Heart right ventricle (tissue), 16 donors: ENCODE measurements at regions of chr4 and their contacts with region 1.

Region 1: DNA sequence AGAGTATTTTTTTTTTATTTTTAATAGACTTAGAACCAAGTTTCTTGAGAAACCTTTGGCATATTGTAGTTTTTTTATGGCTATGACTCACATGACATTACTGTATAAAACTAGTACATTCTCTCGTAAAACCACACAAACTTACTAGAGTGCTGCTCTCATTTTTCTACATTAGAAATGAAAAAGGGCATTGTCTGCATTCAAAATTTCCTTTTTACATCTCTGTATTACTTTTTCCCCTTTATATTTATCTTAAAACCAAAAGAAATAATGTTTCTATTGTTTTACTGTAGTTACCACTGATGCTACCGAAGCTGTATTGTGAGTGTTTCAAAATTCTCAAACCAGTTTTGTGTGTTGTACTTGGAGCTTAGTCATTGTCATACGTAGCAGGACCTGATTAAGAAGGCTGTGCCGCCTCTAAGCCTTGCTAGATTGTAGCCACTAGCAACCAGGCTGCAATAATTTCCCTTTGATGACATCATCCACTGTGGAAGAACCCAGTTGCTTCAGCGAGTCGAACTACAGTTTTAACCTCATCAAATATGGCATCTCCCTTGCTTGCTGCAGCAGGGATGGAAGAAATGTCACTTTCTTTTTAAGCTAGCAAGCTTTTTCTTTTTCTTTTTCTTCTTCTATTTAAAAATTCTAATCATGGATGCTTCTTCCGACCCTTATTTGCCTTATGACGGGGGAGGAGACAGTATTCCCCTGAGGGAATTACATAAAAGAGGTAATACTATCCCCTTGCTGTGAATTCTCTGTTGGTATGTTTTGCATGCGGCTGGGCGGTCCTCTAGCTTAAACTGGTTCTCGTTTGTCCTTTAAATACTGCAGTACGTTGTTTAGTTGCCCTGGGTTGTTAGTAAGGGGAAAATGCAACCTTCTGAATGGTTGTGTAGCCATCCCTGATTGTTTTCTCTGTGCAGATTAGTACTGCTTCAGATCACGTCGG is 39.6 kb downstream of the CLCN3 start:
- DNase-seq: peak in 1 of 2 donors; percentile 89
- ATAC-seq: peak; percentile 96 to 100 (median 99)
- H3K4me3 ChIP-seq: peak overlapping the region; percentile 19 to 59 (median 50)
- H3K27ac ChIP-seq: peak overlapping the region; percentile 68 to 89 (median 84)
- H3K4me1 ChIP-seq: peaks cover 0 to 64% (median 33%) of the 10 kb centered on the region in 9 donors
- H3K27me3 ChIP-seq: no peaks in the 10 kb centered on the region
- CTCF ChIP-seq: no peak

Region 2: DNA sequence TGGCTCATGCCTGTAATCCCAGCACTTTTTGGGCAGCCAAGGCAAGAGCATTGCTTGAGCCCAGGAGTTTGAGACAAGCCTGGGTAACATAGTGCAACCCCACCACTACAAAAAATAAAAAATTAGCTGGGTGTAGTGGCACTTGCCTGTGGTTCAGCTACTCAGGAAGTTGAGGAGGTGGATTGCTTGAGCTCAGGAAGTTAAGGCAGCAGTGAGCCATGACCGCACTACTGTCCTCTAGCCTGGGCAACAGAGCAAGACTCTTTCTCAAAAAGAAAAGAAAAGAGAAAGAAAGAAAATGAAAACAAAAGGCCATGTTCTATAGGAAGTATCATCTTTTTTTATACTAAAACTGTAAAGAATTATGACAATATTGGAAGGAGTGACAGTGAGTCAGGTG is 86.1 kb before region 1 on chr4:
- intact Hi-C with region 1: no loop called
- DNase-seq: no peak
- ATAC-seq: no peak
- H3K4me3 ChIP-seq: no peak overlapping the region
- H3K27ac ChIP-seq: no peak overlapping the region
- H3K4me1 ChIP-seq: no peaks in the 10 kb centered on the region
- H3K27me3 ChIP-seq: no peaks in the 10 kb centered on the region
- CTCF ChIP-seq: no peak

Region 3: DNA sequence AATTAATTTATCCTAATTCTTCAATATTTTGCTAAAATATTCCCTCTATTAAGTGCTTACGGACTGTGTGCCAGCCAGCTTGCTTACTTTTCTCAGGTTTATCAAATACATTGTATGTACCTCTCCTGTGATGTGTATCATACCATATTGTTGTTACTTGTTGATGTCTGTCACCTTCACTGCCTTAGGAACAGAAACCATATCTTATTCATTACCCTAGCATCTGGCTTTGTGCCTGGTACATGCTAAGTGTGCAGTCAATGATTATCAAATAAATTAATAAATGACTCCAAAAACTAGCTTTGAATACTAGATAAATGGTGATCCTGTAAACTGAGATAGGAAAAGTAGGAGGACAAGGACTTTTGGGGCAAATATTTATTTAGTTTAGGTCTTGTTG is 32.7 kb before region 1 on chr4:
- intact Hi-C with region 1: loop called in 3 of 10 experiments (anchors 5 kb)
- DNase-seq: no peak
- ATAC-seq: peak in 3 of 8 donors; percentile 40 to 49 (median 41)
- H3K4me3 ChIP-seq: no peak overlapping the region
- H3K27ac ChIP-seq: peak overlapping the region in 7 of 10 donors; percentile 12 to 55 (median 47)
- H3K4me1 ChIP-seq: peaks cover 0 to 61% (median 26%) of the 10 kb centered on the region in 9 donors
- H3K27me3 ChIP-seq: no peaks in the 10 kb centered on the region
- CTCF ChIP-seq: no peak

Region 4: DNA sequence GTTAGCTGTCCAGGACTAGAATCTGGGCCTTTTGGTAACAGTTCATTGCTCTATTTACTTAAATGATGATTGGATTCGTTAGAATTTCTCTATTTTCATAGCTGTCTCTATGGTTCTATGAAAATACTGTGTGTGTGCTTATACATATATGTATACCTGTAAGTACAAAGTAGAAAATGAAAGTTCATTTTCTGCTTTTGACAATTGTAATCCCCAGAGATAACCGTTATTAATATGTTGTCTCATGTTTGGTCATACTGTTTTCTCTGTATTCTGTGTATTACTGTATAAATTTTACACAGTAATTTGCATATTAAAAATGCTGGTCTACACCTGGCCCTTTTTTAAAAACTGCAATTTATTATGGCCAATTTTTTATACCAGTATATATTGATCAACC is 15.8 kb after region 1 on chr4:
- intact Hi-C with region 1: loop called in 1 of 10 experiments (anchors 2 kb)
- DNase-seq: no peak
- ATAC-seq: no peak
- H3K4me3 ChIP-seq: no peak overlapping the region
- H3K27ac ChIP-seq: no peak overlapping the region
- H3K4me1 ChIP-seq: peaks cover 0 to 30% (median 0%) of the 10 kb centered on the region in 9 donors
- H3K27me3 ChIP-seq: no peaks in the 10 kb centered on the region
- CTCF ChIP-seq: no peak

Region 5: DNA sequence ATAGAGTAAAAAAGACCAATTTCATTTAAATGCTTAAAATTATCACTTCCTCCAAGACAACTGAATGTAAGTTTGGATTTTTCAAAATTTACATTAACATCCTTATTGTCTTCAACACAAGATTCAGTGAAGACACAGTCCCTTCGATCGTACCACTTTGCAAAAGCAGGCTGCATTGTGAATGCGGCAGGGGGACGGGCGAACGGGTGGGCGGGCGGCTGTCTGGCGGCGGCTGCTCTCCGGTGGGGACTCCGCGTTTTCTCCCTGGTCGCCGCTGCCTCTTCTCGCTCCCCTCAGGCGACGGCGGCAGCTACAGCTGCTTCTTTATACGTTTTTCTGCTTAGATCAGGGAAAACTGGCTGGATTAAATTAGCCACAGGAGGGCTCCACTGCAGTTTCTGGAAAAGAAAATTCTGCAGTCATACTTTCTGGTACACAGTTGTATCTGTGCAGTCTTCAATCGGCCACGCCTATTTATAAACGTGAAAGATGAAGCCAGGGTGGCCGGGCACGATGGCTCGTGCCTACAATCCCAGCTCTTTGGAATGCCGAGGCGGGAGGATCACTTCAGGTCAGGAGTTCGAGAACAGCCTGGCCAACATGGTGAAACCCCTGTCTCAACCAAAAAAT is 131.6 kb after region 1 on chr4:
- intact Hi-C with region 1: no loop called
- DNase-seq: peak; percentile 21 to 22
- ATAC-seq: peak in 7 of 8 donors; percentile 42 to 70 (median 65)
- H3K4me3 ChIP-seq: peak overlapping the region in 7 of 10 donors; percentile 16 to 43 (median 34)
- H3K27ac ChIP-seq: no peak overlapping the region
- H3K4me1 ChIP-seq: peaks cover 0 to 10% (median 4%) of the 10 kb centered on the region in 9 donors
- H3K27me3 ChIP-seq: peaks cover 0 to 53% (median 36%) of the 10 kb centered on the region in 7 donors
- CTCF ChIP-seq: peak; percentile 12 to 68 (median 54)